ENCODE measurements at regions of chr17 and their contacts with region 1.

Region 1: DNA sequence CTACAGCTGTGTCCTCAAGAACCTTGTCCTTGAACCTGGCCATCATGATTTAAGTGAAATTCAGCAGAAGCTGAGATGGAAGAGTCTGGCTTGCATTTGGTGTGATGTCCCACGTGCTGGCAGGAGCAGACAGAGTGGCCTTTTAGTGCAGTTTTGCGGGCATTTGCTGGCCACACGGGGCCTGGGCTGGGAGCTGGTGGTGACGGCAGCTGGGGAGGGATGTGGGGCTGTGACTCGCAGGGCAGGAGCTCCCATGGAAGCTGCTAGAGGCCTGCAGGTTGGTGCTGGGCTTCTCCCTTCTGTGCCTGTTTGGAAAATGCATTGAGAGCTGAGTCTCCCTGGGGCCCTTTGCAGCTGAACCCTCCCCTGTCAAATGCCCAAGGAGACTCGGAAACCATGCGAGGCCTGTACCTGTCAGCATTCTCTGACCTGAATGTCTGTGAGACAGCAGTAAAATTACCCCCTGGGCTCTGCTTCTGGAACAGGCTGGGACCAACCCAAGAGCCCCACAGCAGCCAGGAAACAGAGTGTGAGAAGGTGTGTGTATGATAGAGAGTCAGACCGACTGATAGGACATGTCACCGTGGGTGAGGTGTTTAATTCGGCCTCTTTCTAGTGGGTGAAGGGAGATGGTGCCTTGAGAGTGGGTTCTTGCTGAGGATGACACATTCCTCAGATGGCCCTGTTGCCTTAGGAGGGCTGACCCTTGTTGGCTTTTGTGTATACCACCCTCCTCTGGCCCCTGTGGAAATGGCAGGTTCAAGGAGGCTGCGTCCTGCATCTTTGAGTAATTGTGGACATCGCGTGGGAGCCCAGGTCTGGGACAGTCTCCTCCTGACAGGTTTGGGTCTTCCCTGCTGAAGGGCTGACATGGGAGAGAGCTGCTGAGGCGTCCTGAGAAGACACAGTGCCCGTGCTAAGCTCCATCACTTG is 145.5 kb downstream of the MSI2 start:
- DNase-seq: no peak
- H3K4me3 ChIP-seq: no peak overlapping the region
- H3K27ac ChIP-seq: no peak overlapping the region
- H3K4me1 ChIP-seq: peaks cover 2 to 7% (median 5%) of the 10 kb centered on the region in 4 experiments; a peak in 6 of 7 replicates
- H3K27me3 ChIP-seq: no peaks in the 10 kb centered on the region
- CTCF ChIP-seq: peak; percentile 60 to 74 (median 72)
- EP300 ChIP-seq: no peak
- POLR2A ChIP-seq: no peak
- RAD21 ChIP-seq: peak; percentile 79 to 85

Region 2: GRCh38 chr17:57311281-57312216 is 90.3 kb before region 1 on chr17:
- CTCF ChIA-PET with region 1: no interaction called
- POLR2A ChIA-PET with region 1: no interaction called
- DNase-seq: no peak
- H3K4me3 ChIP-seq: no peak overlapping the region
- H3K27ac ChIP-seq: no peak overlapping the region
- H3K4me1 ChIP-seq: peaks cover 9 to 35% (median 26%) of the 10 kb centered on the region in 4 experiments
- H3K27me3 ChIP-seq: no peaks in the 10 kb centered on the region
- CTCF ChIP-seq: no peak
- EP300 ChIP-seq: no peak
- POLR2A ChIP-seq: no peak
- RAD21 ChIP-seq: no peak

Region 3: GRCh38 chr17:57357399-57357807 is 44.4 kb before region 1 on chr17:
- CTCF ChIA-PET with region 1: interaction called, 10 read pairs
- POLR2A ChIA-PET with region 1: no interaction called
- DNase-seq: no peak
- H3K4me3 ChIP-seq: no peak overlapping the region
- H3K27ac ChIP-seq: peak overlapping the region; percentile 19; the same call in 1 of the 2 replicates
- H3K4me1 ChIP-seq: peaks cover 2 to 10% (median 5%) of the 10 kb centered on the region in 4 experiments; a peak in 5 of 7 replicates
- H3K27me3 ChIP-seq: no peaks in the 10 kb centered on the region
- CTCF ChIP-seq: no peak
- EP300 ChIP-seq: no peak
- POLR2A ChIP-seq: no peak
- RAD21 ChIP-seq: no peak

Region 4: DNA sequence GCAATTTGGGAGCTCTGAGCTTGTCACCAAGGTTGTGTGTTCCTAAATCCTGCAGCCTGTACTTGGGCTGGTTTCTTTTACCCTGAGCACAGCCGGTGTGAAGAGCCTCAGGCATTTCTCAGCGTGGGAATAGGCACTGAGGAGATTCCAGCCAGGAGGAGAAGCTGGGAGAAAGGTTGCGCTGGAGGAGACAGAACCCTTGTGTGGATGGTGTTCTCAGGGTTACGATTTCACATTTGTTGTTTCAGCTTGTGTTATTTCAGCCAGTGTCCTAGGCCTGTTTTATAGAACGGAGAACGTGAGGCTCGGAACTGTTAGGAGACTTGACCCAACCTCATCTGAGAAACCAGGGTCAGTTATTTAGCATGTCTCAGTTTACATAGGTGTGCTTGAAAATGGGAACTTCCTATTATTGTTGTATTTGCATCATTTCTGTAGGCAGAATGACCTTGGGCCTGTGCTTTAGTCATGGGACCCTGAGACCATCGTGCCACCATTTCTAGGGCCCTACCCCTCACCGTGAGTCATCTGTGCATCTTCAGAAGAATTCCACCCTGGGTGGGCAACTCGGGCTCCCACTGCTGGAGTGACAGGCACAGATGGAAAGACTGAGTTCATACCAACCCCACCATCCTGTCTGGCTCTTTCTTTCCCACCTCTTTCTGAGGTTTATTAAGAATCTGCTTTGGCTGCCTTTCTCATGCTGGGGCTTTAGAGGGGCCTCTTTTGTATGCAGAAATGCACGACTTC is 10.6 kb before region 1 on chr17:
- CTCF ChIA-PET with region 1: interaction called, 23 read pairs
- POLR2A ChIA-PET with region 1: interaction called, 3 read pairs
- DNase-seq: no peak
- H3K4me3 ChIP-seq: no peak overlapping the region
- H3K27ac ChIP-seq: no peak overlapping the region
- H3K4me1 ChIP-seq: peaks cover 10 to 15% (median 12%) of the 10 kb centered on the region in 4 experiments
- H3K27me3 ChIP-seq: no peaks in the 10 kb centered on the region
- CTCF ChIP-seq: no peak
- EP300 ChIP-seq: no peak
- POLR2A ChIP-seq: no peak
- RAD21 ChIP-seq: no peak

Measured in H1 (cell line).